Spleen (tissue), 13 donors: ENCODE measurements at regions of chr3 and their contacts with region 1.

Region 1: GRCh38 chr3:45654397-45654944 is 34.7 kb upstream of the SACM1L start:
- DNase-seq: no peak
- H3K4me3 ChIP-seq: no peak overlapping the region
- H3K27ac ChIP-seq: peak overlapping the region in 7 of 8 donors; percentile 13 to 67 (median 53)
- H3K4me1 ChIP-seq: peaks cover 0 to 72% (median 39%) of the 10 kb centered on the region in 6 donors
- H3K27me3 ChIP-seq: no peaks in the 10 kb centered on the region
- CTCF ChIP-seq: no peak
- POLR2A ChIP-seq: no peak

Region 2: DNA sequence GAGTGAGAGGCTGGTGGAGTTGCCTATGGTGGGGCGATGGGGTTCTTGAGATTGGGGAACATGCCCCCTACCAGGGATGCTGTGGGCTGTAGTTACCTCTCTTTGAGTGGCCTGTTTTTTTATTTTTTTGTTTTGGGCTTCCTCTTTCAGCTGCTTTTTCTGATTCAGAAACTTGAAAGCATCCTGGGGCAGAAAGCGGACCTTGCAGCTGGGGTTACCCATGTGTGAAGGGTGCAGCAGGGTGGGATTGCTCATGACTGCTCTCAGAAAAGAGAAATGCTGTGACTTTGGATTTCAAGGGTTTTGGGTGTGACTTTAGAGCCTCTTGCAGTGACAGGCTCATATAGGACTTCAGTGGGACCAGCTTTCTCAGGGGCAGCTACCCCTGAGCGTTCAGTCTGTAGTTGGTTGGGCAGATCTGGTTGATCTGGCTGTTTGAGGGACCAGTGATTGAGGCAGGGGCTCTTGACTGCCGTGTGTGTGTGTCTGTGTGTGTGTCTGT is 58.1 kb before region 1 on chr3:
- intact Hi-C with region 1: loop called (anchors 5 kb)
- DNase-seq: peak; percentile 88
- H3K4me3 ChIP-seq: peak overlapping the region; percentile 25 to 94 (median 78)
- H3K27ac ChIP-seq: peak overlapping the region; percentile 35 to 96 (median 79)
- H3K4me1 ChIP-seq: peaks cover 66 to 91% (median 84%) of the 10 kb centered on the region in 6 donors
- H3K27me3 ChIP-seq: no peaks in the 10 kb centered on the region
- CTCF ChIP-seq: no peak
- POLR2A ChIP-seq: no peak

Region 3: GRCh38 chr3:45715945-45716344 is 61.5 kb after region 1 on chr3:
- intact Hi-C with region 1: no loop called
- DNase-seq: no peak
- H3K4me3 ChIP-seq: no peak overlapping the region
- H3K27ac ChIP-seq: no peak overlapping the region
- H3K4me1 ChIP-seq: peaks cover 0 to 4% (median 0%) of the 10 kb centered on the region in 6 donors
- H3K27me3 ChIP-seq: no peaks in the 10 kb centered on the region
- CTCF ChIP-seq: no peak
- POLR2A ChIP-seq: no peak